WTC11 (cell line): ENCODE measurements at regions of chr14 and their contacts with region 1.

Region 1: GRCh38 chr14:23379366-23380196 is 2.7 kb downstream of the CMTM5 start:
- DNase-seq: peak; percentile 76
- ATAC-seq: peak; percentile 63
- H3K4me3 Mint-ChIP-seq: no peak overlapping the region
- H3K27ac Mint-ChIP-seq: no peak overlapping the region
- H3K4me1 Mint-ChIP-seq: peaks cover 11% of the 10 kb centered on the region
- H3K27me3 Mint-ChIP-seq: peaks cover 59% of the 10 kb centered on the region
- CTCF ChIP-seq: peak; percentile 93

Region 2: DNA sequence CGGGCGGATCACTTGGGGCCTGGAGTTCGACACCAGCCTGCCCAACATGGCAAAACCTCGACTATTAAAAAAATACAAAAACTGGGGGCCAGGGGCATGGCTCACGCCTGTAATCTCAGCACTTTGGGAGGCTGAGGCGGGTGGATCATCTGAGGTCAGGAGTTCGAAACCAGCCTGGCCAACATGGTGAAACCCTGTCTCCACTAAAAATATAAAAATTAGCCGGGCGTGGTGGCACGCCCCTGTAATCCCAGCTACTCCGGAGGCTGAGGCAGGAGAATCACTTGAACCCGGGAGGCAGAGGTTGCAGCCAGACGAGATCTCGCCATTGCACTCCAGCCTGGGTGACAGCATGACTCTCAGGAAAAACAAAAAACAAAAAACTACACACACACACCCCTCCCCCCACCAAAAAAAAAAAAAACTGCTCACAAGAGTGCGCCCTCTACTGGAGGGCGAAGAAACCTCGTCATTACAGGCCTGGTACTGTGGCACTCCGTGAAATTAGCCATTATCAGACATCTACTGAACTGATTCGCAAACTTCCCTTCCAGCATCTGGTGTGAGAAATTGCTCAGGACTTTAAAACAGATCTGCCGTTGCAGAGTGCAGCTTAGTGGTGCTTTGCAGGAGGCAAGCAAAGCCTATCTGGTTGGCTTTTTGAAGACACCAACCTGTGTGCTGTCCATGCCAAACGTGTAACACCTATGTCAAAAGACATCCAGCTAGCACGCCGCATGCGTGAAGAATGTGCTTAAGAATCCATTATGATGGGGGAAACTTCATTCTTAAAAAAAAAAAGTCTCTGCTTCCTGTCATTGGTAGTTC is 84.6 kb before region 1 on chr14:
- CTCF ChIA-PET with region 1: interaction called, 11 read pairs
- POLR2A ChIA-PET with region 1: no interaction called
- DNase-seq: peak; percentile 28
- ATAC-seq: peak; percentile 55
- H3K4me3 Mint-ChIP-seq: no peak overlapping the region
- H3K27ac Mint-ChIP-seq: no peak overlapping the region
- H3K4me1 Mint-ChIP-seq: peaks cover 20% of the 10 kb centered on the region
- H3K27me3 Mint-ChIP-seq: peaks cover 99% of the 10 kb centered on the region
- CTCF ChIP-seq: peak; percentile 90

Region 3: DNA sequence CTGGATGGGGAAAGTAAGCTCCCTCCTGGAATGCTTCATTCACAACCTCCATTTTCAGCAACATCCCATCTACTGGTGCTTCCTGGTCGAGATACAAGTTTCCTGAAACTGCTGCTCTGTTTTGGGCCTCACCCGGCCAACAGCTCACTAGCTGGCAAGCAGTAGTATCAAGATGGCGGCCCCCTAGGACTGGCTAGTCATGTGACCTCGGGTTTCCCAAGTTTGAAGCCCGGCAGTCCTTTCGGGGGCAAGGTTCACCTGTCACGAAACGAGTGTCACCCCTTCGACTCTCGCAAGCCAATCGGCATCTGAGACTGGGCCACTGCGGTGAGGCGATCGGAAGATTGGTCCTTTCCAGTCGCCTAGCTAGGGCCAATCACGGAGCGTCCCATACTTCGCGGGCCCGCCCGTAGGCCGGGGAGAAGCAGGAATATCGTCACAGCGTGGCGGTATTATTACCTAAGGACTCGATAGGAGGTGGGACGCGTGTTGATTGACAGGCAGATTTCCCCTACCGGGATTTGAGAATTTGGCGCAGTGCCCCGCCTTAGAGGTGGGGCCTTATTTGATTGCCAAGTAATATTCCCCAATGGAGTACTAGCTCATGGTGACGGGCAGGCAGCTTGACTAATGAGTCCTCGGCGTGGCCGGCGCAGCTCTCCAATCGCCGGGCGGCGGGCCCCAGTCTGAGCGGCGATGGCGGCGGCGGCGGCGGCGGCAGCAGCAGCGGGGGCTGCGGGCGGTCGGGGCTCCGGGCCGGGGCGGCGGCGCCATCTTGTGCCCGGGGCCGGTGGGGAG is 58.6 kb before region 1 on chr14 and contains the start of gene PABPN1:
- CTCF ChIA-PET with region 1: interaction called, 42 read pairs
- POLR2A ChIA-PET with region 1: interaction called, 4 read pairs
- DNase-seq: peak; percentile 98
- ATAC-seq: peak; percentile 93
- H3K4me3 Mint-ChIP-seq: peak within 1 kb of the TSS; percentile 96
- H3K27ac Mint-ChIP-seq: peak within 1 kb of the TSS; percentile 99
- H3K4me1 Mint-ChIP-seq: peaks cover 26% of the 10 kb centered on the region
- H3K27me3 Mint-ChIP-seq: no peaks in the 10 kb centered on the region
- CTCF ChIP-seq: no peak
- total RNA-seq, gene PABPN1: 290 to 321 TPM (median 295 TPM) in 3 replicates

Region 4: GRCh38 chr14:23352511-23353432 is 26.8 kb before region 1 on chr14 and contains the start of gene SLC22A17:
- CTCF ChIA-PET with region 1: interaction called, 34 read pairs
- POLR2A ChIA-PET with region 1: no interaction called
- DNase-seq: peak; percentile 84
- ATAC-seq: peak; percentile 90
- H3K4me3 Mint-ChIP-seq: peak within 1 kb of the TSS; percentile 63
- H3K27ac Mint-ChIP-seq: peak within 1 kb of the TSS; percentile 67
- H3K4me1 Mint-ChIP-seq: peaks cover 11% of the 10 kb centered on the region
- H3K27me3 Mint-ChIP-seq: peaks cover 43% of the 10 kb centered on the region
- CTCF ChIP-seq: no peak
- total RNA-seq, gene SLC22A17: 42.3 to 52.4 TPM (median 51.4 TPM) in 3 replicates

Region 5: DNA sequence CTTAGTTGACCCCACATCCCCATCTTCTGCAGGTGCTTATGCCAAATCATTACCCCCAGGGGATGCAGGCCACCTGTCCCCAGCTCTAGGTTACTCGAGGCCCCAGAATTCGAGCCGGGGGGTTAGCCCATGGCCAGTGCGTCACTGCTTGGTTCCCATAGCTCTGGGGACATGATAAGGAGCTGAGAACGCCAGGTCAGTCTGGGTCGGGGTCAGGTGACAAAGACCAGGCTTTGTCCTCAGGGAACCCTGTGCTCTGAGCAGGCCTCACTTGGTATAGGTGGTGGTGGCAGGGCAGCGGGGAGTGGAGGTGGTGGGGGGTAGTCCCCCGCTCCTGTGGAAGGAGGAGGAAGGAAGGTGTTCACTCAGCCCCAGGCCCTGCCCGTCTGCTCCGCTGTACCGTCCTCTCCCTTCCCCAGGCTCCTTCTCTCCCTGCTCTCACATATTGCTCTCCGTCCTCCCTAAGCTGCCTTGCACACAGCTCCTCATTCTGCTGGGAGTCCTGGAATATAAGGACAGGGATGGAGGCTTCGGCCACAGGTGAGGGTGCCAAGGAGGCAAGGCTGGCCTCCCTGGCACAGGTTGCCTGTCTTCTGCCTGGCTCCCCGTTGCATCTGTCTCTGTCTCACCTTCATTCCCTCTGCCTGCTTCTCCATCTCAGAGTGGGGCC is 30.5 kb after region 1 on chr14:
- CTCF ChIA-PET with region 1: interaction called, 11 read pairs
- POLR2A ChIA-PET with region 1: no interaction called
- DNase-seq: no peak
- ATAC-seq: no peak
- H3K4me3 Mint-ChIP-seq: no peak overlapping the region
- H3K27ac Mint-ChIP-seq: no peak overlapping the region
- H3K4me1 Mint-ChIP-seq: no peaks in the 10 kb centered on the region; the same call in 1 of the 2 replicates
- H3K27me3 Mint-ChIP-seq: peaks cover 20% of the 10 kb centered on the region
- CTCF ChIP-seq: no peak

Region 6: DNA sequence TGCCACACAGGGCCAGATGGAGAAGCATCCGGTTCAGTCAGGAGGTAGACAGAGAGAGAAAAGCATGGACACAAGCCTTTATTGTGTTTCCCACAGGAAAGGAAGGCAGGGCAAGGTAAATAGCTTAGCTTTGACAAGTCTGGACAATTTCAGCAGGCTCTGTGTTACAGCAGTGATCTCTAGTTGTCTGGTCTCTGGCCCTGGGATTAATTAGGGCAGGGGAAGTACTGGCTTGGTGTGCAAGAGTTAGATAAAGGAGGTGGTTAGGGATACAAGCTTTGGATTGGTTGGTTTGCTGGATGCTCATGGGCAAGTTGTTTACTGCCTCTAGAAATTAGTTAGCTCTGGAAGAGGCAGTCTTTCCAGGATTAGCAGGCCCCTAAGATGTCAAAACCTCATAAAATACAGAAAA is 74.9 kb after region 1 on chr14:
- CTCF ChIA-PET with region 1: interaction called, 24 read pairs
- POLR2A ChIA-PET with region 1: no interaction called
- DNase-seq: no peak
- ATAC-seq: no peak
- H3K4me3 Mint-ChIP-seq: no peak overlapping the region
- H3K27ac Mint-ChIP-seq: no peak overlapping the region
- H3K4me1 Mint-ChIP-seq: peaks cover 2% of the 10 kb centered on the region
- H3K27me3 Mint-ChIP-seq: peaks cover 5% of the 10 kb centered on the region; the same call in 1 of the 2 replicates
- CTCF ChIP-seq: no peak

Region 7: DNA sequence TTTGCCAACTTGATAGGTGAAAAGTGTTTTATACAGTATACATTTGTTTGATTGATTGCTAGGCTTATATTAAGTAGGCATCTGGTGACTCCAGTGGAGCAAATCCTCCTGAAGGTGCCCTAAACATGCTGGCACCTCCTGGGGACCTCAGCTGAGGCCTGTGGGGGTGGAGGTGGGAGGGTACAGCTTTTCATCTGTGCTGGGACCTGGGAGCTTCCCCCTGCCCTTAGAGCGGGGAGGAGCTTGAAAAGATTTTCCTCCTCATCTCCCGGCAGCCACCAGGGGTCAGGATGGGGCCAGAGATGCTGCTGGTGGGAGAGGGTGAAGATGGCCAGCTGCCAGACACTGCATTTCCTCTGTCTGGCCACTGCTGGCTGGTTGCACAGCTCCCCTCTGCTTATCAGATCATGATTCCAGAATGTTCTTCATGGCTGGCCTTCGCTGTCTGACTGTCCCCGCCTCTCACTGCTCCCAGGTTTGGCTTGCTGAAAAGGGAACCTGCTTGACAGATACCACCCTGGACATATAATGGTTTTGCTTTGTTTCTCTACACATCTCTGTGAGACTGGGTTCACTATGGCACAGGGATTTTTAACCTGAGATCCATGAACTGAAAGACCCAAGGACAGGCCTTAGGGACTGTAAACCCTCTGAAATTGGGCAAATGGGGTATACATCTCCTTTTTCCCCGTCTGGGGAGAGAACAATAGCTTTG is 209.5 kb after region 1 on chr14:
- CTCF ChIA-PET with region 1: no interaction called
- POLR2A ChIA-PET with region 1: no interaction called
- DNase-seq: peak; percentile 91
- ATAC-seq: peak; percentile 100
- H3K4me3 Mint-ChIP-seq: no peak overlapping the region
- H3K27ac Mint-ChIP-seq: no peak overlapping the region
- H3K4me1 Mint-ChIP-seq: peaks cover 20% of the 10 kb centered on the region
- H3K27me3 Mint-ChIP-seq: peaks cover 16% of the 10 kb centered on the region
- CTCF ChIP-seq: peak; percentile 68